ENCODE measurements at regions of chr1 and their contacts with region 1.

Region 1: GRCh38 chr1:12339396-12339795 is 109.6 kb downstream of the VPS13D start:
- DNase-seq: no peak
- ATAC-seq: 0 out of 2 replicates have a peak, but pooled peaks have one; percentile 32
- H3K4me3 ChIP-seq: no peak overlapping the region
- H3K27ac ChIP-seq: no peak overlapping the region
- H3K4me1 ChIP-seq: no peaks in the 10 kb centered on the region
- H3K27me3 ChIP-seq: no peaks in the 10 kb centered on the region
- CTCF ChIP-seq: no peak
- POLR2A ChIP-seq: no peak
- RAD21 ChIP-seq: no peak

Region 2: DNA sequence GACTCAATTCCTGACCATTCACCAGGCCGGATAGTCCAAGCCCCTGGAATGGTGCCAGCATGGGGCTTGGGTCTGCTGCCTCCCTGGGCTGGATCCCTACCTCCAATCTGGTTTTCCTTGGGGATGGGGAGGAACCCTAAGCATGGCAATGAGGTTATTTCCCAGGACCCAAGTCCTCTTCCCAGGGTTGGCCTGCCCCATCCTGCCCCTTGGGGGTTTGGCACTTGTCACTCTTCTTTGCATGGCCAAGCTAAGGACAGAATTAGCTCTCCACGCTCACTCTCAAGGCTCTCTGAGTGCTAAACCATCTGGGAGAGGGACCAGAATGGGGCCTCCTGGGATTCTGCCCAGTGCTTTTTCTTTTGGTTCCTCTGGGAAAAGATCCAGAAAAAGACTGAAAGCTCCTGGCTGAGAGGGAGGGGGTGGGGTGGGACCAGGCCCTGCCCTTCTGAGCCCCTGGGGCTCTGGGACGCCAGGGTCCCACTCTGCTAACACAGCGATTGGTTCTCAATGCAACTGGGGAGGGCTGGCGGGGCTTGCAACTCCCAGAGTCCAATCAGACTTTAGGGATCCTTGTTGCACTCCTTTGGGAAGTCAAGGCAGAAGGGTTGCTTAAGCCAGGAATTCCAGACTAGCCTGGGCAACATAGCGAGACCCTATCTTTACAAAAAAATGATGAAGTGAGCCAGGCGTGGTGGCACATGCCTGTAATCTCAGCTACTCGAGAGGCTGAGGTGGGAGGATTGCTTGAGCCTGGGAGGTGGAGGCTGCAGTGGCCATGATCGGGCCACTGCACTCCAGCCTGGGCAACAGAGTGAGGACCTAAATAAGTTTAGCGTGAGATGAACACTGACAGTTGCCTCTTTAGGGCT is 225.9 kb after region 1 on chr1:
- CTCF ChIA-PET with region 1: no interaction called
- POLR2A ChIA-PET with region 1: no interaction called
- dilution Hi-C with region 1: no loop called
- in situ Hi-C with region 1: no loop called
- intact Hi-C with region 1: no loop called
- DNase-seq: no peak
- ATAC-seq: peak; percentile 53
- H3K4me3 ChIP-seq: no peak overlapping the region
- H3K27ac ChIP-seq: no peak overlapping the region
- H3K4me1 ChIP-seq: peaks cover 3% of the 10 kb centered on the region; the same call in 1 of the 2 replicates
- H3K27me3 ChIP-seq: no peaks in the 10 kb centered on the region
- CTCF ChIP-seq: no peak
- POLR2A ChIP-seq: no peak
- RAD21 ChIP-seq: no peak

Region 3: GRCh38 chr1:12629521-12629956 is 290.1 kb after region 1 on chr1:
- CTCF ChIA-PET with region 1: interaction called, 3 read pairs
- POLR2A ChIA-PET with region 1: interaction called, 11 read pairs
- dilution Hi-C with region 1: no loop called
- in situ Hi-C with region 1: no loop called
- intact Hi-C with region 1: no loop called
- DNase-seq: no peak
- ATAC-seq: no peak
- H3K4me3 ChIP-seq: no peak overlapping the region
- H3K27ac ChIP-seq: no peak overlapping the region
- H3K4me1 ChIP-seq: no peaks in the 10 kb centered on the region
- H3K27me3 ChIP-seq: peaks cover 42% of the 10 kb centered on the region
- CTCF ChIP-seq: no peak
- POLR2A ChIP-seq: no peak
- RAD21 ChIP-seq: no peak